Thyroid gland (tissue), 4 donors: ENCODE measurements at regions of chr17 and their contacts with region 1.

Region 1: GRCh38 chr17:7280519-7281429 is 744 bp upstream of the SLC2A4 start:
- DNase-seq: peak; percentile 82 to 83
- H3K4me3 ChIP-seq: peak overlapping the region in 1 of 3 donors; percentile 27
- H3K27ac ChIP-seq: peak overlapping the region; percentile 75 to 84 (median 81)
- H3K4me1 ChIP-seq: peaks cover 16 to 23% of the 10 kb centered on the region in 2 donors
- H3K27me3 ChIP-seq: no peaks in the 10 kb centered on the region
- CTCF ChIP-seq: peak; percentile 73 to 99 (median 96)
- POLR2A ChIP-seq: no peak

Region 2: DNA sequence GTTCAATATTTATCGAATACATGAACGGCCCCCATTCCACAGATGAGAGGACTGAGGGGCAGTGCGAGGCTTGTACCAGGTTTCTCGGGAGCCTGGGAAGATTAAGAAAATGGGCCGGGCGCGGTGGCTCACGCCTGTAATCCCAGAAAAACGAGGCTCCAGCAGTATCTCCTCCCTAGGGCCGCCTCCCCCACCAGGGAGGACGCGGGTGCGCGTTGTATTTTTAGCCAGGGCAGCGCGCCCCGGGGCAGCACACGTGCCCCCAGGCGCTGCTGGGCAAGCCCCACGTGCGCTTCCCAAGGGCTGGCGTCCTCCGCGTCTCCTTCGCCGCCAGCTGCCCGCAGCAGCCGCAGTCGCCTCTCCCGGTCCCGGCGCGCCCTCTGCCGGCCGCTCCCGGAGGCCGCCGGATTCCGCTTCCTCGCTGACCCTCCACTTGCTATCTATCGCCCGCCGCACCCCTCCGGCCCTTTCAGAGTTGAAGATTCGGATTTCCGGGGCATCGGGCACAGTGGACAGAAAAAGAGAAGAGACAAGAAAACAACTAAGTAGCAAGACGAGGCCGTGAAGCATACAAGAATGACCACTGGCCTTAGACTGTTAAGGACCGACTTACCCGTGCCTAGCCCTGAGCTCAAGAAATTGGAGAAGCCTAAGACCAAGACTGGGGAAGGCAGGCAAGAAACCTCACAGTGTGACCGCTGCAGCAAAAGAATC is 15.6 kb after region 1 on chr17:
- intact Hi-C with region 1: loop called (anchors 2 kb)
- DNase-seq: peak; percentile 85
- H3K4me3 ChIP-seq: no peak overlapping the region
- H3K27ac ChIP-seq: peak overlapping the region in 1 of 3 donors; percentile 12
- H3K4me1 ChIP-seq: peaks cover 8 to 36% of the 10 kb centered on the region in 2 donors
- H3K27me3 ChIP-seq: no peaks in the 10 kb centered on the region
- CTCF ChIP-seq: peak; percentile 80 to 97 (median 93)
- POLR2A ChIP-seq: no peak

Region 3: DNA sequence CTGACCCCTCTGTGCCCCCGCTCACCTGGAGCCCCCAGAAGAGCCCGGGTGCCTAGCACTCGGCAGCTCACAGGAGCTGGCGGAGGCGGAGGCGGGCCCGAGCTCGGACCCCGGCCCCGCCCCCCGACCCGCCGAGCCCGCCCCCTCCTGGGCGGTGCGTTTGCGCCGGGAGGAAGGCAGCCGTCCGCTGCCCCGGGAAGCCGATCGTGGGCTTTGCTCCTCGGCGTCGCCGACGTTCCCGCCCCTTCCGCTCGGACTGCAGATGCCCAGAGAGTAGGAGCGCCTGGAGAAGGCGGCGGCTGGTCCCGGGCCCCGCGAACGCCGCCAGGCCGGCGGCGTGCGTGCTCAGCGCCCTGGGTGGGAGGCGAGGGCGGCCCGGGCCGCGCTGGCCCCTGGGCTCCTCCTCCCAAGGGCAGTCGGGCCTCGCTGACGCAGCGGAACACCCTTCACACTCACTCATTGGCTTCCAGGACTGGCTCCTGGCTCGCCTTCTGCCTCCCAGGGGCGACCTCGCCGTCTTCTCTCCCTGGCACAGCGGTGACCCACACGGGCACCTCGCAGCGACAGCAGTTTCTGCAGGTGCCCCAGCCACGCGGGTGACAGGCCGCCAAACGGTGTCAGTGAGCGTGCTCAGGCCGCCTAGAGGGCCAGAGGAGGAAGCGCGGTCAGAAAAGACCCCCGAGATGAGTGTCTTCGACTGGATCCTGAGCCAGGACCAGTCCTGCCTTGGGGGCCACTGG is 113.8 kb after region 1 on chr17 and contains the start of gene PLSCR3:
- intact Hi-C with region 1: no loop called
- DNase-seq: peak; percentile 86 to 89
- H3K4me3 ChIP-seq: peak within 1 kb of the TSS; percentile 65 to 79 (median 67)
- H3K27ac ChIP-seq: peak within 1 kb of the TSS; percentile 72 to 93 (median 92)
- H3K4me1 ChIP-seq: peaks cover 11 to 18% of the 10 kb centered on the region in 2 donors
- H3K27me3 ChIP-seq: no peaks in the 10 kb centered on the region
- CTCF ChIP-seq: peak in 5 of 6 experiments; percentile 20 to 46 (median 41)
- POLR2A ChIP-seq: peak in 1 of 2 donors; percentile 91
- total RNA-seq, gene PLSCR3: 18.3 to 21.6 (median 19.9) TPM